Left ventricle myocardium superior (tissue), 1 donor: ENCODE measurements at regions of chr9 and their contacts with region 1.

Region 1: GRCh38 chr9:4339357-4339756 is 39.5 kb upstream of the GLIS3 start:
- DNase-seq: peak; percentile 90
- ATAC-seq: peak; percentile 45

Region 2: DNA sequence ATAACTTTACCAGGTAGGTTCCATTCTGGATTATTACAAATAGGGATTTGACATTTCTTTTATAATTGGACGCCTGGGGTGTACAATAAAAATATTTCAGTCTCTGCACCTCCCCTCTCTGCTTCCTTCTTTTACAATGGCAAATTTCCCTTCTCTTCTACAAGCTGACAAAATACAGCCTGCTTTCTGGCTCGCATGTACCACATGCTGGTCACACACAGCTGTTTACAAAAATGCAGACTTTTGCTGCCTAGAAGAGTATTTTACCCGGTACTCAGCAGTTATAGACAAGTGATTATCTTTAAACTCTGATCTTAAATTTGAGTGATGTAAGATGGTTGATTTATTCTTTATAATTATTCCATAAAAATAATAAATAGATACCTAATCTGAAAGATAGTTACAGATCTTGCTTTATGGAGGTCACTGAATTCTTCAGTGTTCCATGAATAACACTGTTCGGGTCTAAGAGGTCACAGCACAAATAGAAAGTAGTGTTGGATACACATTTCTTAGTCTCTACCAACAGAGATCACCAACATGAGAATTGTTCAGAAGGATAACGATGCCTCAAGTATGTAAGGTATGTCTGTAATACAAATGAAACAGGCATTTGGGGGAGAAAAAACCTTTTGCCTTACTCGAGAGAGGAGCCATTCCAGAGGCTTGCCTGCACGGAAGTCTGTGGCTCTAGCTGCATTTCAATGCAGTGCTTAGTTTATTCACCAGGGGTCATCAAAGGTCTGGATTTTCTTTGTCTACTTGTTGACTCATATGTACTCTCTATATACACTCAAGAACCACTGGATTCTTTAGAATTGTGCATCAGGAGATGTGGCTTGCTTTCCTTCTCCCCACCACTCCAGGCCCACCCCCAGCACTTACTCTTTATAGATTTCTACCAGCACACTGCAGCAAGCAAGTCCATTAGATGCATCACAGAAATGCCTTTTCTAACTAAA is 607.0 kb before region 1 on chr9:
- intact Hi-C with region 1: loop called (anchors 5 kb)
- DNase-seq: no peak
- ATAC-seq: peak; percentile 99

Region 3: GRCh38 chr9:4315582-4316215 is 23.7 kb before region 1 on chr9:
- intact Hi-C with region 1: loop called (anchors 2 kb)
- DNase-seq: peak; percentile 87
- ATAC-seq: peak; percentile 97

Region 4: GRCh38 chr9:4464911-4465513 is 125.7 kb after region 1 on chr9:
- intact Hi-C with region 1: no loop called
- DNase-seq: no peak
- ATAC-seq: no peak